ENCODE measurements at regions of chr11 and their contacts with region 1.

Region 1: GRCh38 chr11:9972989-9973388 is 309.1 kb downstream of the SWAP70 start:
- DNase-seq: no peak
- H3K4me3 ChIP-seq: no peak overlapping the region
- H3K27me3 ChIP-seq: no peaks in the 10 kb centered on the region
- CTCF ChIP-seq: peak; percentile 72

Region 2: GRCh38 chr11:9757809-9758636 is 215.0 kb before region 1 on chr11:
- CTCF ChIA-PET with region 1: interaction called, 13 read pairs
- POLR2A ChIA-PET with region 1: interaction called, 5 read pairs
- DNase-seq: no peak
- H3K4me3 ChIP-seq: peak overlapping the region; percentile 30
- H3K27me3 ChIP-seq: no peaks in the 10 kb centered on the region
- CTCF ChIP-seq: no peak; the same call in 1 of the 2 replicates

Region 3: GRCh38 chr11:9787981-9788521 is 184.9 kb before region 1 on chr11:
- CTCF ChIA-PET with region 1: interaction called, 3 read pairs
- POLR2A ChIA-PET with region 1: interaction called, 10 read pairs
- DNase-seq: peak; percentile 70
- H3K4me3 ChIP-seq: no peak overlapping the region
- H3K27me3 ChIP-seq: no peaks in the 10 kb centered on the region
- CTCF ChIP-seq: no peak

Region 4: GRCh38 chr11:9982800-9983579 is 10.0 kb after region 1 on chr11:
- CTCF ChIA-PET with region 1: interaction called, 12 read pairs
- POLR2A ChIA-PET with region 1: no interaction called
- DNase-seq: no peak
- H3K4me3 ChIP-seq: no peak overlapping the region
- H3K27me3 ChIP-seq: no peaks in the 10 kb centered on the region
- CTCF ChIP-seq: no peak

Measured in BJ (cell line).